Caco-2 (cell line): ENCODE measurements at regions of chr2 and their contacts with region 1.

Region 1: DNA sequence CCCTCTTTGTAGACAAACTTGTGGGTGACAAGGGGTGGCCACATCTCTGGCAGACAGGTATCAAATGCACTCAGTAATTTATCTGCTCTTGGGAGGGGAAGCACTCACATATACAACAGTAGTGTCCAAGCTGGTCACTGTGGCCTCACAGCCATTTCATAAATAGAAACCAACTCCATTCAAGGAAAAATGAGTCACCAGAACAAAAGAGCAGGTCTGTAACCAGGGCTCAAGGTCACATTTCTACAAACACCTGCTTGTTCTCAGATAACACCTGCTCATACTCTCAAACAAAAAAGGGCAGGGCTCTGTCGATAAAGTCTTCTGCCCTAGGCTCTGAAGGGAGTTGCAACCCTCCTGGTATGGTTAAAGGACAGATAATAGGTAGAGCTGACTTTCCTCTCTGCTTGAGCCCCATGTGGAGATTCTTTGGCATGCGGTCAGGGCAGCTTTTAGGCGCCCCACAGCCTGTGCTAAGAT is 459.0 kb downstream of the BCL11A start:
- DNase-seq: peak; percentile 84 to 88
- H3K4me3 ChIP-seq: no peak overlapping the region
- H3K4me3 Mint-ChIP-seq: peak overlapping the region; percentile 49
- H3K27ac Mint-ChIP-seq: peak overlapping the region; percentile 94
- H3K4me1 ChIP-seq: peaks cover 72% of the 10 kb centered on the region
- H3K4me1 Mint-ChIP-seq: peaks cover 75% of the 10 kb centered on the region
- H3K27me3 ChIP-seq: no peaks in the 10 kb centered on the region
- H3K27me3 Mint-ChIP-seq: no peaks in the 10 kb centered on the region
- CTCF ChIP-seq: no peak

Region 2: GRCh38 chr2:60152226-60152833 is 57.8 kb after region 1 on chr2:
- CTCF ChIA-PET with region 1: no interaction called
- POLR2A ChIA-PET with region 1: no interaction called
- intact Hi-C with region 1: loop called (anchors 1 kb)
- DNase-seq: peak in 1 of 2 experiments; percentile 45
- H3K4me3 ChIP-seq: no peak overlapping the region
- H3K4me3 Mint-ChIP-seq: no peak overlapping the region
- H3K27ac Mint-ChIP-seq: no peak overlapping the region
- H3K4me1 ChIP-seq: no peaks in the 10 kb centered on the region
- H3K4me1 Mint-ChIP-seq: no peaks in the 10 kb centered on the region
- H3K27me3 ChIP-seq: no peaks in the 10 kb centered on the region
- H3K27me3 Mint-ChIP-seq: no peaks in the 10 kb centered on the region
- CTCF ChIP-seq: peak; percentile 80 to 90

Region 3: DNA sequence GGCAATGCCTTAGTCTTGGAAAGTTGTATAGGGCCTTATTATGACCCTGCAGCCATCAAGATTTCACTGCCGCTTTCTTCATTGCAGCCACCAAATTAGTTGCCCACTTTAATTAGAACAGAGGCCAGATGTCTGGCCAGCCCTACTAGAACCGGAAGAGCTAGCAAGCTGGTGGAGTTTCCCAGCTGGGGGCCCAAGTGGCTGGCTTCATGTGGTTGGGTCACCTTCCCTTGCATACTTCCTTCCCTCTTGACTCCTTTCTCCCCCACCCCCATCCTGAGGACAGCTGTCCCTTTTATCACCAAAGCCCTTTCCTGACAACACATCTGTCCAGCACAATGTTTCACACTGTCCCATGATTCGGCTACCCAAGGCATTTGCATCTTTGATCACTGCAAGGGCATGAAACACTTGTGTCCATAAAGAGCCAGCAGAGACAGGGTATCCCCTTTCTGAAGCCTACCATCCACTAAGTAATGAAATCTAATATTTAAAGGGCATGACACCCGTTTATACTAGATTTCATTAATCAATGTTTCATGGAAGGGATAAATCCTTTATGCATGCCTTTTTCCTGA is 271.7 kb after region 1 on chr2:
- CTCF ChIA-PET with region 1: no interaction called
- POLR2A ChIA-PET with region 1: no interaction called
- intact Hi-C with region 1: loop called (anchors 5 kb)
- DNase-seq: no peak
- H3K4me3 ChIP-seq: no peak overlapping the region
- H3K4me3 Mint-ChIP-seq: peak overlapping the region; percentile 55
- H3K27ac Mint-ChIP-seq: peak overlapping the region; percentile 91
- H3K4me1 ChIP-seq: peaks cover 30% of the 10 kb centered on the region
- H3K4me1 Mint-ChIP-seq: peaks cover 30% of the 10 kb centered on the region
- H3K27me3 ChIP-seq: no peaks in the 10 kb centered on the region
- H3K27me3 Mint-ChIP-seq: no peaks in the 10 kb centered on the region
- CTCF ChIP-seq: no peak